ENCODE measurements at regions of chr2 and their contacts with region 1.

Region 1: GRCh38 chr2:42663106-42663780 is 94.8 kb downstream of the MTA3 start:
- DNase-seq: peak; percentile 79
- H3K4me3 Mint-ChIP-seq: no peak overlapping the region
- H3K27ac Mint-ChIP-seq: no peak overlapping the region
- H3K4me1 Mint-ChIP-seq: no peaks in the 10 kb centered on the region
- H3K27me3 Mint-ChIP-seq: no peaks in the 10 kb centered on the region
- CTCF ChIP-seq: peak; percentile 98

Region 2: DNA sequence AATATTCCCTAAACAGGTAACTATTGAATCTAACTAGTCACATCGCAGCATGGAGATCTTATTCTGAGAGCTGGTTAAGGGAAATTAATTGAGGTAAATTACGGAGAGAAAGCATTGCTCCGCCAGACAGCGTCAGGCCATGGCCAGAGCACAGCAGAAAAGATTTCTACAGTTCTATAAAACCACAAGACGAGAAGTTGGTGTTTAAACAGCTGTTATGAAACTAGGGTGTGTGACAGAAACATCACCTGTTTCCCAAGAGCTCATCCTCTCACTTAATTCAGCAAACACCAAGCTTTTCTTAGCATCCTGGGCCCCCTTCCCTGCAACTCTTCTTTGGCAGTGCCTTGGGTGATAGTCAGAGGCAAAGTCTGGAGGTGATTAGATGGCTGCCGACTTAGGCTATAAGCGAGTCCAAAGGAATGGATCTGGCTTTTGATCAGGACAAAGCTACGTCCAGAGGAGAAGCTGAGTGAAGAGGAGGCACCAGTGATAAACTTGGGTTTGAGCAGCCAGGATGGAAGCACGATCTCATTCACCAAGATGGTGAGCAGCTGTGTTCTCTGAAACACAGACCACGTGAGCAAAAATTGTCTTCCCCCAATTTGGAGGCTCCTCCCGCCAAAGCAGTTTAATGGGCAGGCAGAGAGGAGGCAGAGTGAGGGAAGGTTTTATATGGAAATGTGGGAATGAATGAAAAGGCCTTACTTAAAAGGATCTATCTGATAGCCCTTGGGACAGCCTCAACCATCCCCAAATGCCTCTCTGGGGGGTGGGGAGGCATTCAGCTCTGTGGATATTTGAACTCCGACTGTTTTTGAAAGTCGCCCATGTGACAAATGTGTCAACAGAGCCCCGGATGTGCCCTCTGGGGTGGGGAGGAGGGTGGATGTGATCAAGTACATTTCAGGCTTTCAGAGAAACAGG is 557.6 kb before region 1 on chr2:
- CTCF ChIA-PET with region 1: no interaction called
- POLR2A ChIA-PET with region 1: no interaction called
- intact Hi-C with region 1: no loop called
- DNase-seq: no peak
- H3K4me3 Mint-ChIP-seq: no peak overlapping the region
- H3K27ac Mint-ChIP-seq: no peak overlapping the region
- H3K4me1 Mint-ChIP-seq: no peaks in the 10 kb centered on the region
- H3K27me3 Mint-ChIP-seq: no peaks in the 10 kb centered on the region
- CTCF ChIP-seq: no peak

Region 3: GRCh38 chr2:42360890-42361727 is 302.1 kb before region 1 on chr2 and contains the start of gene COX7A2L:
- CTCF ChIA-PET with region 1: no interaction called
- POLR2A ChIA-PET with region 1: no interaction called
- intact Hi-C with region 1: loop called (anchors 10 kb)
- DNase-seq: peak; percentile 96
- H3K4me3 Mint-ChIP-seq: peak within 1 kb of the TSS; percentile 79
- H3K27ac Mint-ChIP-seq: peak within 1 kb of the TSS; percentile 86
- H3K4me1 Mint-ChIP-seq: peaks cover 32% of the 10 kb centered on the region
- H3K27me3 Mint-ChIP-seq: no peaks in the 10 kb centered on the region
- CTCF ChIP-seq: no peak
- total RNA-seq, gene COX7A2L: 190 and 249 TPM in 2 replicates

Region 4: DNA sequence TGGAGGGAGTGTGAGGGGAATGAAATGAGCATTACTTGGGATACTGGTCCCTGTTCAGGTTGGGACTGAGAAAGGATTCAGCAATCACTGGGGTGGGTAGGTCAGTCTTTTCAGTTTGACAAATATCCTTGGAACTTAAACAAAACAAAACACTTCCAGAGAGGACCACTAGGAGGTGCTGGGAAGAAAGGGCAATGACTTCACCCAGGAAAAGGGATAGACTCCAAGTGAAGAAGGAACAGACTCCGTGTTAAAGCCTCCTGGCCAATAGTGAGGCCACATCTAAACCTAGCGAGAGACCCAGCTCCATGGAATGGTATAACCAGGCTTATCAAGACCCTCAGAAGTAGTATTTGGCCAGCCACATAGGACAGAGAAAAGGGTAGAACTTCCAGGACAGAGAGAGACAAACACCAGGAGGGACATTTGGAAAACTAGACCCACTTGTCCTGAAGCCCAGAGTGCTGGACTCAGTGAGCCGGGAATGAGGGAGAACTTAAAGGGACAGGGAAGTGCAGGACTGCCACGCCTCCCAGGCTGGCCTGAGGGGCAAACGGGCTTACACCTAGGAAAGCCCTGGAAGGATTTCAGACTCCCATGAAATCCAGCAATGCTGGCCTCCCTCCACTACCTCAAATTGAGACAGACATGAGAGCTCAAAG is 149.9 kb before region 1 on chr2:
- CTCF ChIA-PET with region 1: interaction called, 17 read pairs
- POLR2A ChIA-PET with region 1: interaction called, 3 read pairs
- intact Hi-C with region 1: loop called (anchors 1 kb)
- DNase-seq: peak; percentile 80
- H3K4me3 Mint-ChIP-seq: no peak overlapping the region
- H3K27ac Mint-ChIP-seq: no peak overlapping the region
- H3K4me1 Mint-ChIP-seq: peaks cover 7% of the 10 kb centered on the region
- H3K27me3 Mint-ChIP-seq: no peaks in the 10 kb centered on the region
- CTCF ChIP-seq: peak; percentile 64

Region 5: DNA sequence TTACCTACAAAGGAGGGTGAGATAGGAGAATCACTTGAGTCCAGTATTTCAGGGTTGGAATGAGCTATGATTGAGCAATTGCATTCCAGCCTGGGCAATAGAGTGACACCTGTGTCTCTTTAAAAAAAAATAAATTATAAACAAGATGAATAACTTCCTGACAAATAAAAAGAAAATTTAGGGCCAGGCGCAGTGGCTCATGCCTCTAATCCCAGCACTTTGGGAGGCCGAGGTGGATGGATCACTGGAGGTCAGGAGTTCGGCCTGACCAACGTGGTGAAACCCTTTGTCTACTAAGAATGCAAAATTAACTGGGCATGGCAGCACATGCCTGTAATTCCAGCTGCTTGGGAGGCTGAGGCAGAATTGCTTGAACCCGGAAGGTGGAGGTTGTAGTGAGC is 77.4 kb before region 1 on chr2:
- CTCF ChIA-PET with region 1: no interaction called
- POLR2A ChIA-PET with region 1: no interaction called
- intact Hi-C with region 1: no loop called
- DNase-seq: no peak
- H3K4me3 Mint-ChIP-seq: no peak overlapping the region
- H3K27ac Mint-ChIP-seq: no peak overlapping the region
- H3K4me1 Mint-ChIP-seq: no peaks in the 10 kb centered on the region
- H3K27me3 Mint-ChIP-seq: no peaks in the 10 kb centered on the region
- CTCF ChIP-seq: no peak

Region 6: GRCh38 chr2:42652086-42652485 is 11.2 kb before region 1 on chr2:
- CTCF ChIA-PET with region 1: interaction called, 19 read pairs
- POLR2A ChIA-PET with region 1: no interaction called
- intact Hi-C with region 1: no loop called
- DNase-seq: no peak
- H3K4me3 Mint-ChIP-seq: no peak overlapping the region
- H3K27ac Mint-ChIP-seq: no peak overlapping the region
- H3K4me1 Mint-ChIP-seq: no peaks in the 10 kb centered on the region
- H3K27me3 Mint-ChIP-seq: no peaks in the 10 kb centered on the region
- CTCF ChIP-seq: no peak

Region 7: DNA sequence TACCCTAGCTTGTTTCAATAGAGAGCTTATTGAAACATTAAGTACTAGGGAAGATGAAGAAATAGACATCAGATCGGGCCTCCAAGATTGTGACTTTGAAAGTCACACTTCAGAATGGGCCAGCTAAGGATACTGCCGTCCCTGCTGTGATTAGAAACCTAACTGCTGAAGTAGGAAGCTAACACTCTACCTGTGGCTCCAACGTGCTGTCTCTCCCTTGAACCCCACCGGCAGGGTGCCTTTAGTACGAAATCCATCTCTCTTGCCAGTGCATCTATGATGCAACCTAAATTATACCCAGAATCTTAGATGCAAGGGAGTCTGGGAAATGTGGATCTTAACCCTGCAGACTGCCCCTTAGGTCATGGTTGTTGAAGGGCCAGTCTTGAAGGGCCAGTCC is 22.1 kb after region 1 on chr2:
- CTCF ChIA-PET with region 1: interaction called, 12 read pairs
- POLR2A ChIA-PET with region 1: no interaction called
- intact Hi-C with region 1: no loop called
- DNase-seq: no peak
- H3K4me3 Mint-ChIP-seq: no peak overlapping the region
- H3K27ac Mint-ChIP-seq: no peak overlapping the region
- H3K4me1 Mint-ChIP-seq: no peaks in the 10 kb centered on the region
- H3K27me3 Mint-ChIP-seq: no peaks in the 10 kb centered on the region
- CTCF ChIP-seq: no peak